Calu3 (cell line): ENCODE measurements at regions of chr5 and their contacts with region 1.

Region 1: GRCh38 chr5:149731639-149732323 is 1.7 kb downstream of the PPARGC1B start:
- DNase-seq: peak; percentile 59
- H3K4me3 Mint-ChIP-seq: peak overlapping the region; percentile 96
- H3K27ac Mint-ChIP-seq: no peak overlapping the region
- H3K4me1 Mint-ChIP-seq: peaks cover 25% of the 10 kb centered on the region
- H3K27me3 Mint-ChIP-seq: peaks cover 13% of the 10 kb centered on the region
- CTCF ChIP-seq: no peak

Region 2: DNA sequence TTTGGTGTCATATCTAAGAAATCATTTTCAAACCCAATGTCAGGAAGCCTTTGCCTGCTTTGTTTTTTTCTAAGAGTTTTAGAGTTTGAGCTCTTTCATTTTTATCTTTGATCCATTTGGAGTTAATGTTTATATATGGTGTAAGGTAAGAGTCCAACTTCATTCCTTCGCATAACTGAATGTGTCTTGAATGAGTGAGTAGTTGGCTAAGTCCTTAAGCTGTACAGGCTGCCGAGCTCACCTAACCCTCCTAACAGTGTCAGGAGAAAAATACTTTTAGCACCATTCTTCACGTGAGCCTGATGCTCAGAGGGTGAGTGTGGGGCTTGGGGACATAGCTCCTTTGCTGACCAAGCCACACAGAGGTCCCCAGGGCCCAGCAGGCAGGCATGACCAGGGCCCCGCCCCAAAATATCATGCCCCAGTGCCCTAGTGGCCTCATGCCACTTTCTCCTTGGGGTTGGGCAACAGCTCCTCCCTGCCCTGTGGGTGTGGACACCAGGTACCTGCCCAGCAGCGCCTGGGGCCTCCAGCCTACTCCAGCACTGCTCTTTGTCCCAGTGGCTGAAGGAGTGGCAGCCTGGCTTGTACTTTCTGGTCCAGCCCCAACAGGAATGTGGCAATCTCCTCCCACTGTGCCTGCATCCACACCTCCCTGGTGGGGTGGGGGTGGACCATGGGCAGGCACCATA is 15.5 kb after region 1 on chr5:
- CTCF ChIA-PET with region 1: interaction called, 15 read pairs
- intact Hi-C with region 1: no loop called
- DNase-seq: peak; percentile 88
- H3K4me3 Mint-ChIP-seq: peak overlapping the region; percentile 24
- H3K27ac Mint-ChIP-seq: peak overlapping the region; percentile 50
- H3K4me1 Mint-ChIP-seq: peaks cover 56% of the 10 kb centered on the region
- H3K27me3 Mint-ChIP-seq: no peaks in the 10 kb centered on the region
- CTCF ChIP-seq: no peak

Region 3: GRCh38 chr5:149775785-149776184 is 44.0 kb after region 1 on chr5:
- CTCF ChIA-PET with region 1: interaction called, 4 read pairs
- intact Hi-C with region 1: loop called (anchors 5 kb)
- DNase-seq: peak; percentile 33
- H3K4me3 Mint-ChIP-seq: no peak overlapping the region
- H3K27ac Mint-ChIP-seq: no peak overlapping the region
- H3K4me1 Mint-ChIP-seq: peaks cover 52% of the 10 kb centered on the region
- H3K27me3 Mint-ChIP-seq: no peaks in the 10 kb centered on the region
- CTCF ChIP-seq: peak; percentile 65

Region 4: DNA sequence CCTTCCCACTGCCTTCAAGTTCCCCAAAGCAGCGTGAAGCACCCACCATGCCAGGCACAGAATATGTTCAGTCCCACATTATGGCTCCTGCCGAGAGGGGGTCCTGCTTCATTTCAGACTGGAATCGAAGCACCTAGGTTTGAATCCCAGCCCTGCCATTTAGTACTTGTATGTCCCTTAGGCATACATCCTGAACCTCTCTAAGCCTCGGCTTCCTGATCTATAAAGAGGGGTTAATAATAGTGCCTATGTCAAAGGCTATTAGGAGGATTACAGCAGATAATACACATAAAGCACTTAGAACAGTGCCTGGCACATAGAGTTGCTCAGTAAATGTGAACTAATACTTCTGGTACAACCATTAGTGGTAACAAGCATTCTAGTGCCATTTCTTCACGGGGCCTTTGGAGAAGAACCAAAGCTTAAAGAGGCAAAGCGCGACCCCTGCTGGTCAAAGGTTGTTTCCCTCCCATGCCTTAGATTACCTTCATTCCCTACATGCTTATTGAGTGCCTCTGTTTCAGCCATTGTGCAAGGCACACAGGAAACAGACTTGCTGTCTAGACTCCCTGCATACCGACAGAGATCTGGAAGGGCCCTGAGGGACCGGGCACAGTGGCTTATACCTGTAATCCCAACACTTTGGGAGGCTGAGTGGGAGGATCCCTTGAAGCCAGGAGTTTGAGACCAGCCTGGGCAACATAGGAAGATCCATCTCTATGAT is 96.5 kb after region 1 on chr5:
- CTCF ChIA-PET with region 1: interaction called, 3 read pairs
- intact Hi-C with region 1: loop called (anchors 2 kb)
- DNase-seq: peak; percentile 92
- H3K4me3 Mint-ChIP-seq: no peak overlapping the region
- H3K27ac Mint-ChIP-seq: peak overlapping the region; percentile 47
- H3K4me1 Mint-ChIP-seq: peaks cover 7% of the 10 kb centered on the region
- H3K27me3 Mint-ChIP-seq: no peaks in the 10 kb centered on the region
- CTCF ChIP-seq: peak; percentile 77